Natural killer cell (primary cell): ENCODE measurements at regions of chr9 and their contacts with region 1.

Region 1: DNA sequence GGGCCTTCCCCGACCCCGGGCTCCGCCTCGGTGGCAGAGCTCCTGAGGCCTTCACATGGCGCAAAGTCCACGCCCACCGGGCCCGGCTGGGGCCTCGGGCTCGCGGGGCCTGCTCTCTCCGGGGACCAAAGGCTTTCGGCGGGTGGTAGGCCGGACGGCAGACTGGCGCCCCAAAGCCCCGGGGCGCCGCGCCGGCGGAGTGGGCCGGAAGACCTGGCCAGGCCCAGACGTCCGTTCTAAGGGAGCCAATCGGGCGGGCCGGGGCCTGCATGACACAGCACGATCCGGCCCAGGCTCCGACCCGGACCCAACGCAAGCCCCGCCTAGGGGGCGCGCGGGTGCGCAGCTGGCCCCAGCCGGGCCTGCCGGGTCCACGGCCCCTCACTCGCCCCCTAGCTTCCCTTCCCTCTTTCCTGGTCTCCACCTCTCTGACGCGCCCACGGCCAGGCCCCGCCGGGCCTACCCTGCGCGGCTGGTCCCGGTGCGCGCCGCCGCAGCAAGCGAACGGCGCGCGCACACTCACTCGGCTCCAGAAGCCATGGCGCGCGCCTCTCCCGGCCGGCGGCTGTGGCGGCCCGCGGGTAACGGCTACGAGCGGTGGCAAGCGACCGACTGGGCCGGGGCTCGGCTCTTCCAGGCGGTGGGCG is 488 bp downstream of the VCP start:
- DNase-seq: peak; percentile 82 to 83
- ATAC-seq: peak; percentile 67 to 85 (median 73)
- H3K4me3 ChIP-seq: peak overlapping the region; percentile 74
- H3K4me3 Mint-ChIP-seq: peak overlapping the region; percentile 88
- H3K27ac ChIP-seq: peak overlapping the region; percentile 96
- H3K27ac Mint-ChIP-seq: peak overlapping the region; percentile 88 to 94
- H3K4me1 ChIP-seq: peaks cover 42% of the 10 kb centered on the region
- H3K4me1 Mint-ChIP-seq: peaks cover 52 to 57% of the 10 kb centered on the region in 2 donors
- H3K27me3 ChIP-seq: no peaks in the 10 kb centered on the region
- H3K27me3 Mint-ChIP-seq: no peaks in the 10 kb centered on the region
- CTCF ChIP-seq: peak; percentile 34

Region 2: DNA sequence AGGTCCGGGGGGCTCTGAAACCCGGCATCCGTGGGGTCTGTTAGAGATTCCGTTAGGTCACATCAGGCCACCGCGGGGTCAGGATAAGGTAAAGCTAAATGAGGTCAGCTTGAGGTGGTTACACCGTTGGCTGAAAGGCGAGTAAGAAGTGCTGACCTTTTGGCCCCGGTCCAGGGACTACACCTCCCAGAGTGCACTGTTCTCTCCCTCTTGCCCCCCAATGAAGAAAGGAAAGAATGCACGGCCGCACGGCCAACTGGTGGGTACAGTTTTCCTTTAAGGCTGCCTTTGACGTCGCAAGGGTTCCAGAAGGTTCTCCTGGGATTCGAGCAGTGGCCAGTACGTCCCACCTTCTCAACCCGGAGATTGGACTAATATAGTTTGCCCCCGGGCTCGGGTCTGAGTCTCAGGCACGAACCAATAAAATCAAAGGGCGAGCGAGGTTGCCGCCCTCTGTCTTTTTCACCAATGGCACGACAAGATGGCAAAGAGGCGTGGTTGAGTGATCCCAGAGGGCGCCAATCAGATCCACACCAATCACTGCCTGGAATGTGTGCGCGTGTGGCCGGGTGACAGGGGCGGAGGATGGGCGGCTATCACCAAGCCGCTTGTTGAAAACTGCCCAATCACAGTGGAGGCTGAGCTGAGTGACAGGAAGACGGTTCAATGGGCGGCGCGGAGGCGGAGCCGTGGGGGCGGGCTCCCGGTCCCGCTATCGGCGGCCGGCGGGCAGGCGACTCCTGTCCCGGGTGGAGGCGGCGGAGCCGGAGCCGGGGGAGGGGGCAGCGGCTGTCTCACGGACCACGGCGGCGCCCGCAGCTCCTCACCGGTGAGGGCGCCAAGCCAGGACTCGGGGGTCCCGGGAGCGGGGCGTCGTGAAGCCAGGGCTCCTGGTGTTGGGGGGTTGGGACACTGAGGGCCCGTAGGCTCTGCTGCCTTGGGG is 82.7 kb before region 1 on chr9 and contains the start of gene DNAJB5:
- intact Hi-C with region 1: loop called (anchors 1 kb)
- DNase-seq: peak; percentile 99
- ATAC-seq: peak; percentile 94 to 99 (median 96)
- H3K4me3 ChIP-seq: peak within 1 kb of the TSS; percentile 73
- H3K4me3 Mint-ChIP-seq: peak within 1 kb of the TSS; percentile 98
- H3K27ac ChIP-seq: peak within 1 kb of the TSS; percentile 45
- H3K27ac Mint-ChIP-seq: peak within 1 kb of the TSS; percentile 83 to 84
- H3K4me1 ChIP-seq: peaks cover 35% of the 10 kb centered on the region
- H3K4me1 Mint-ChIP-seq: peaks cover 27 to 36% of the 10 kb centered on the region in 2 donors
- H3K27me3 ChIP-seq: no peaks in the 10 kb centered on the region
- H3K27me3 Mint-ChIP-seq: peaks cover 0 to 2% of the 10 kb centered on the region in 2 donors
- CTCF ChIP-seq: no peak
- total RNA-seq, gene DNAJB5: 1.1 to 2.4 (median 1.9) TPM

Region 3: DNA sequence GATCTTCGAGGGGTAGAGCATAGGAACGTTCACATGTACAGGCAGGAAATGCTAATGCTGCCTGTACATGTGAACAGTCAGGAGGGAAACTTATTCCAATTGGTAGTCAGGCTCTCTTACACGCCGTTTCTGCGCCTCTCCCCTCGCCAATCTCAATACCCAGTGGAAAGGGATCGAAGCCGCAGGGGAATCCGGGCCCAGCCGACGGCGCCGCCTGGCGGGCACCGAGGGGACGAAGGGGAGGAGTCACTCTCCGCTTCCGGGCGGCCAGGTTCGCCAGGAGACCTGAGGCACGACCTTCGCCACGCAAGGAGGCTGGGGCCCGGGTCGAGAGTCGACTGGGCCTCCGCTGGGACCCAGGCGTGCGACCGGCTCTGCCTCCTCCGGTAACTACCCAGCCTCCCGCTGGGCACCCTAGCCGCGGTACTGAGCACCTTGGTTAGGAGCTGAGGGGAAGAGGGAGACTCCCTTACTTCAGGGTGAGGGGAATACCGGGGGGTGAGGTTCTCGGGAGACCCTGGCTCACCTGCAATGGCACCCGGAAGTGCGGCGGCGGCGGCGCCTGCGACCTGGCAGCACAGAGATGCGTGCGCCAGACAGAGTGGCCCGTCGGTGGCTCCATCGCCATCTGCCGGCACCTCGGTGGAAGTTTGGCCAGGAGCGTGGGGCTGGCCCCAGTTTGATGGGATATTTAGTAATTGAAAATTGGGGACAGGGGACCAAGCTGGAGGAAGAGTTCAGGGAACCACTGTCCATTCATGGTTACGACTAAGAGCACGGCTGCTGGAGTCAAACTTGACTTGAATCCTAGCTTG is 24.3 kb after region 1 on chr9 and contains the start of gene PIGO:
- intact Hi-C with region 1: loop called (anchors 1 kb)
- DNase-seq: peak; percentile 85 to 94
- ATAC-seq: peak; percentile 93 to 97 (median 94)
- H3K4me3 ChIP-seq: peak within 1 kb of the TSS; percentile 83
- H3K4me3 Mint-ChIP-seq: peak within 1 kb of the TSS; percentile 86
- H3K27ac ChIP-seq: peak within 1 kb of the TSS; percentile 95
- H3K27ac Mint-ChIP-seq: peak within 1 kb of the TSS; percentile 91 to 93
- H3K4me1 ChIP-seq: peaks cover 15% of the 10 kb centered on the region
- H3K4me1 Mint-ChIP-seq: peaks cover 19 to 37% of the 10 kb centered on the region in 2 donors
- H3K27me3 ChIP-seq: no peaks in the 10 kb centered on the region
- H3K27me3 Mint-ChIP-seq: no peaks in the 10 kb centered on the region
- CTCF ChIP-seq: peak; percentile 87
- total RNA-seq, gene PIGO: 23.6 to 28.2 (median 27.7) TPM

Region 4: GRCh38 chr9:35102926-35103659 is 31.2 kb after region 1 on chr9 and contains the start of gene STOML2:
- intact Hi-C with region 1: loop called (anchors 2 kb)
- DNase-seq: peak; percentile 84 to 97
- ATAC-seq: peak; percentile 96 to 98 (median 98)
- H3K4me3 ChIP-seq: peak within 1 kb of the TSS; percentile 93
- H3K4me3 Mint-ChIP-seq: peak within 1 kb of the TSS; percentile 99
- H3K27ac ChIP-seq: peak within 1 kb of the TSS; percentile 95
- H3K27ac Mint-ChIP-seq: peak within 1 kb of the TSS; percentile 94 to 97
- H3K4me1 ChIP-seq: peaks cover 19% of the 10 kb centered on the region
- H3K4me1 Mint-ChIP-seq: peaks cover 30 to 31% of the 10 kb centered on the region in 2 donors
- H3K27me3 ChIP-seq: no peaks in the 10 kb centered on the region
- H3K27me3 Mint-ChIP-seq: no peaks in the 10 kb centered on the region
- CTCF ChIP-seq: no peak
- total RNA-seq, gene STOML2: 41.4 to 43.9 (median 41.6) TPM